Activated B cell treated with CpG ODN at 0.5 μM for 24 hours (primary cell): ENCODE measurements at regions of chr10 and their contacts with region 1.

Region 1: GRCh38 chr10:96352582-96352981 is 6.2 kb downstream of the OPALIN start:
- DNase-seq: no peak
- ATAC-seq: no peak
- H3K4me3 Mint-ChIP-seq: no peak overlapping the region
- H3K27ac Mint-ChIP-seq: no peak overlapping the region
- H3K4me1 Mint-ChIP-seq: no peaks in the 10 kb centered on the region
- H3K27me3 Mint-ChIP-seq: peaks cover 19% of the 10 kb centered on the region
- CTCF ChIP-seq: no peak

Region 2: DNA sequence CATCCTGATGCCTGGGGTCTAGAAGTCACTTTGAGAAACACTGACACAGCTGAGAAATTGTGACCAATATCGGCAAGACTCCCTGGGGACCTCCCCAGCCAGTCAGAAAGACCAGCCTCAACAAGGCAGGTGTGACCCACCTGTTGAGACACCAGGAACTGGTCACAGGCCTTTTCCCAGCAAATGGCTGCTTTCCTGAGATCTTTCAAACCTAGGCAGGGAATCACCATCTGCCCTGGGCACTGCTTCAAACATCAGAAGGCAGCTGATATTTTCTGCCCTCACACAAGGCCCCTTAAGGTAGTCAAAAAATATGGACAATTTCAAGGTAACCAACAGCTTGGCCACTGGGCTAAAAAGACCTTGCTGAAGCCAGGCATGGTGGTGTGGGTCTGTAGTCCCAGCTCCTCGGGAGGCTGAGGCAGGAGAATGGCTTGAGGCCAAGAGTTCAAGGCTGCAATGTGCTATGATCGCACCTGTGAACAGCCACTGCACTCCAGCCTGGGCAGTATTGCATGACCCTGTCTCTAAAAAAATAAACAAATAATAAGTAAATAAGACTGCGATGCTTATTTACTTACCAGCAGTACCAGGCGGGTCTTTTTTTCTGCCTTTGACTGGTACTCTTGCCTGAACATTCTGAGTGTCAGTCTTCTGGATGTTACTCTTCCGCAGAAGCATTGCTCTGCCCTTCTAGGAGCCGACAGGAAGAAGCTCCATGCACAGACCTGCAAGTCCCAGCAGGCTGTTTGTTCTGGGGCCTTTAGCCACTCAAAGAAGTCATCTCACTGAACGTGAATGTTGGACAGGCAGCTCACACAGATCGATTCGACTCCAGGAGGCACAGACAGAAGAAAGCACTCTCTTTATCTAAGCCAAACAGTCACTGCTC is 851.1 kb before region 1 on chr10:
- CTCF ChIA-PET with region 1: no interaction called
- POLR2A ChIA-PET with region 1: interaction called, 10 read pairs
- intact Hi-C with region 1: no loop called
- DNase-seq: no peak
- ATAC-seq: no peak
- H3K4me3 Mint-ChIP-seq: no peak overlapping the region
- H3K27ac Mint-ChIP-seq: no peak overlapping the region
- H3K4me1 Mint-ChIP-seq: no peaks in the 10 kb centered on the region
- H3K27me3 Mint-ChIP-seq: peaks cover 13% of the 10 kb centered on the region
- CTCF ChIP-seq: no peak

Region 3: GRCh38 chr10:96413151-96413787 is 60.7 kb after region 1 on chr10:
- CTCF ChIA-PET with region 1: no interaction called
- POLR2A ChIA-PET with region 1: no interaction called
- intact Hi-C with region 1: no loop called
- DNase-seq: no peak
- ATAC-seq: no peak
- H3K4me3 Mint-ChIP-seq: no peak overlapping the region
- H3K27ac Mint-ChIP-seq: no peak overlapping the region
- H3K4me1 Mint-ChIP-seq: no peaks in the 10 kb centered on the region
- H3K27me3 Mint-ChIP-seq: peaks cover 14% of the 10 kb centered on the region
- CTCF ChIP-seq: no peak